ENCODE measurements at regions of chr22 and their contacts with region 1.

Region 1: GRCh38 chr22:39454385-39454871 is 2.4 kb upstream of the MGAT3 start:
- DNase-seq: no peak
- ATAC-seq: 0 out of 3 replicates have a peak, but pooled peaks have one; percentile 8
- H3K4me3 ChIP-seq: no peak overlapping the region
- H3K27ac ChIP-seq: no peak overlapping the region
- H3K4me1 ChIP-seq: peaks cover 20% of the 10 kb centered on the region
- H3K27me3 ChIP-seq: no peaks in the 10 kb centered on the region
- CTCF ChIP-seq: no peak
- EP300 ChIP-seq: no peak
- POLR2A ChIP-seq: no peak
- RAD21 ChIP-seq: no peak

Region 2: GRCh38 chr22:39087881-39088684 is 366.3 kb before region 1 on chr22:
- CTCF ChIA-PET with region 1: no interaction called
- POLR2A ChIA-PET with region 1: no interaction called
- RAD21 ChIA-PET with region 1: no interaction called
- SMC1A ChIA-PET with region 1: no interaction called
- in situ Hi-C with region 1: no loop called
- intact Hi-C with region 1: no loop called
- DNase-seq: no peak
- ATAC-seq: no peak
- H3K4me3 ChIP-seq: no peak overlapping the region
- H3K27ac ChIP-seq: no peak overlapping the region
- H3K4me1 ChIP-seq: peaks cover 30% of the 10 kb centered on the region
- H3K27me3 ChIP-seq: no peaks in the 10 kb centered on the region
- CTCF ChIP-seq: no peak
- EP300 ChIP-seq: no peak
- POLR2A ChIP-seq: peak; percentile 53; the same call in 1 of the 2 replicates
- RAD21 ChIP-seq: no peak

Region 3: GRCh38 chr22:39244496-39245129 is 209.8 kb before region 1 on chr22 and contains the start of gene PDGFB:
- CTCF ChIA-PET with region 1: no interaction called
- POLR2A ChIA-PET with region 1: no interaction called
- RAD21 ChIA-PET with region 1: no interaction called
- SMC1A ChIA-PET with region 1: no interaction called
- in situ Hi-C with region 1: no loop called
- intact Hi-C with region 1: no loop called
- DNase-seq: no peak
- ATAC-seq: no peak
- H3K4me3 ChIP-seq: no peak within 1 kb of the TSS
- H3K27ac ChIP-seq: no peak within 1 kb of the TSS
- H3K4me1 ChIP-seq: peaks cover 14% of the 10 kb centered on the region
- H3K27me3 ChIP-seq: peaks cover 13 to 20% of the 10 kb centered on the region in 2 experiments
- CTCF ChIP-seq: no peak
- EP300 ChIP-seq: no peak
- POLR2A ChIP-seq: no peak
- RAD21 ChIP-seq: no peak
- polyA plus RNA-seq, gene PDGFB: 0.13 to 0.19 TPM

Region 4: GRCh38 chr22:39496131-39496838 is 41.9 kb after region 1 on chr22:
- CTCF ChIA-PET with region 1: interaction called, 23 read pairs
- POLR2A ChIA-PET with region 1: no interaction called
- RAD21 ChIA-PET with region 1: interaction called, 3 read pairs
- SMC1A ChIA-PET with region 1: interaction called, 6 read pairs
- in situ Hi-C with region 1: no loop called
- intact Hi-C with region 1: no loop called
- DNase-seq: no peak
- ATAC-seq: peak; percentile 93
- H3K4me3 ChIP-seq: no peak overlapping the region
- H3K27ac ChIP-seq: no peak overlapping the region
- H3K4me1 ChIP-seq: no peaks in the 10 kb centered on the region
- H3K27me3 ChIP-seq: no peaks in the 10 kb centered on the region
- CTCF ChIP-seq: peak; percentile 68 to 86 (median 82)
- EP300 ChIP-seq: no peak
- POLR2A ChIP-seq: no peak
- RAD21 ChIP-seq: peak; percentile 42

Region 5: DNA sequence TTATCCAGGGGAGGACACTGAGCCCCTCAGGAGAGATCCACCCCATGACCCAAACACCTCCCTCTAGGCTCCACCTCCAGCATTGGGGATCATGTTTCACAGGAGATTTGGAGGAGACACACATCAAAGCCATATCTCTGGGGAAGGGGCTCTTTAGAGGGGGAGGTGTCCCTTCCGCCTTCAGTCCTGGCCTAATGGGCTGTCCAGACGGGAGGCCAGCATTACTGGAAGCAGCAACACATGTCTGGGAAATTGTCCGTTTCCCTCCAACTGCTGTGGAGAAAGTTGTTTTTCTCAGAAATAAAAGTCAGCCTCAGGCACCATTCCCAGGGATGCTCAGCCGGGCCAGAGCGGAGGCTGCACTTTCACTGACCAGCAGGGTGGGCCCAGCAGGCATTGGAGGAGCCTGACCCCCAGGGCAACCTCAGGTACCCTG is 125.6 kb after region 1 on chr22:
- CTCF ChIA-PET with region 1: no interaction called
- POLR2A ChIA-PET with region 1: no interaction called
- RAD21 ChIA-PET with region 1: no interaction called
- SMC1A ChIA-PET with region 1: no interaction called
- in situ Hi-C with region 1: no loop called
- intact Hi-C with region 1: no loop called
- DNase-seq: no peak
- ATAC-seq: no peak
- H3K4me3 ChIP-seq: no peak overlapping the region
- H3K27ac ChIP-seq: no peak overlapping the region
- H3K4me1 ChIP-seq: no peaks in the 10 kb centered on the region
- H3K27me3 ChIP-seq: peaks cover 3 to 6% of the 10 kb centered on the region in 2 experiments; a peak in 3 of 4 replicates
- CTCF ChIP-seq: no peak
- EP300 ChIP-seq: no peak
- POLR2A ChIP-seq: no peak
- RAD21 ChIP-seq: no peak

Region 6: DNA sequence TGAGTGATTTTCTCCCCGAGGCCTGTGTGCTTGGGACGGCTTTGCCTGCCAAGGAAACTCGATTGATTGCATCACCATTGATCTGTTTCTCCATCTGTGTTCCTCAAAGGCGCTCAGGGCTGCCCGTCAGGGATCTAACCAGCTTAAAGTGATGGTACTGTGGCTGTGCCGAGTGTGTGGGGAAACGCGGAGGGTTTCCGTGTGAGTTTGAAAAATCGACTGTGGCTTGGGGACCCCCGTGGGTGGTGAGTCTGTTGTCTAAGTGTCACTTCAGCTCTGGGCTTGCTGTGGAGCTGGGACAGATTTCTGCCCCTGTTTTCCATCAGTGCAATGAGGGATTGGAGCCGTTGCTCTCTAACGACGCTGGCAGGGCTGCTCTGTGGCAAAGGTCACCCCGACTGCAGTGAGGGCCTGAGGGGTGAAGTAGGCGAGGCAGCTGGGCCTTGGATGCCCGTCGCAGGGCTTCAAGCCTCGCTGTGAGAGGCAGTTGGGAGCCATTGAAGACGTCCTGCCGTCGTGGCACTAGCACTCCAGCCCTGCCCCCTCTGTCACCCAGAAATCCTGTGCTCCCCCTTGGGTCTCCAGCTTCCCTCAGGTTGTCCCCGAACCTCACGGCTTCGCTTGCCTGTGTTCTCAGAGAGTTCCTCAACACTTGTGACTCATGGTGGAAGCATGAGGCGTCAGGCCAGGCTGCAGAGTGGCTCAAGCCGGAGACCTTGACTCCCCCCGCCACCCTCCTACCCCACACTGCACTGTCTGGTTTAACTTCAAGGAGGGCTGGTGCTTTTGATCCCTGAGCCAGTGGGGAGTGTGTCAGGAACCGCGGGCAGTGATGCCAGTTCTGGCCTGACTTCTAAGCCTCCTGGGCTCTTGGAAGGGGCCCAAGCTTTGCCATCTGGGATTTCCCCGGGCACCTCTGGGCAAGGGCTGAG is 138.0 kb after region 1 on chr22:
- CTCF ChIA-PET with region 1: no interaction called
- POLR2A ChIA-PET with region 1: no interaction called
- RAD21 ChIA-PET with region 1: no interaction called
- SMC1A ChIA-PET with region 1: no interaction called
- in situ Hi-C with region 1: no loop called
- intact Hi-C with region 1: no loop called
- DNase-seq: no peak
- ATAC-seq: no peak
- H3K4me3 ChIP-seq: no peak overlapping the region
- H3K27ac ChIP-seq: no peak overlapping the region
- H3K4me1 ChIP-seq: no peaks in the 10 kb centered on the region
- H3K27me3 ChIP-seq: peaks cover 0 to 2% of the 10 kb centered on the region in 2 experiments; a peak in 3 of 4 replicates
- CTCF ChIP-seq: no peak
- EP300 ChIP-seq: no peak
- POLR2A ChIP-seq: no peak
- RAD21 ChIP-seq: no peak